Naive thymus-derived CD4-positive, alpha-beta T cell (primary cell): ENCODE measurements at regions of chr14 and their contacts with region 1.

Region 1: DNA sequence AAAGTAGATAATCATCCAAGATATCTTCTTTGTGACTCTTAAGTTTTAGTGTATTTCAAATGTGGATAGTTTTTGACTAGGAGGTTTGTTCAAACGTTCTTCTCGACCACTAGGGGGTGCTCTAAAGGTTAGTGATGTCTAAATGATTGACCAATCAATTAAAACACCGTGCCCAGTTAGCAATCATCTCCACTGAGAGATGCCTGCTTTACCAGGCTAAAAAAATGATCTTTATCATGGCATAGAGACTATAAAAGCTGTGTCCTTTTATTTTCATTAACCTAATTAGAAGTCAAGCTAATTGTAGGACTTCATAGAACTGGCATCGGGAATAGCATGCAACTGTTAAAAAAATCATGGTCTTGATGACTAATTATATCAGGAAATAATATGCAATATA is 153.9 kb downstream of the PRKCH start:
- DNase-seq: peak in 2 of 9 donors; percentile 32 to 34
- ATAC-seq: no peak
- H3K4me3 ChIP-seq: no peak overlapping the region
- H3K4me3 Mint-ChIP-seq: peak overlapping the region in 8 of 10 donors; percentile 28 to 94 (median 48)
- H3K27ac ChIP-seq: peak overlapping the region; percentile 98
- H3K27ac Mint-ChIP-seq: peak overlapping the region in 8 of 9 donors; percentile 84 to 100 (median 96)
- H3K4me1 ChIP-seq: peaks cover 93 to 95% of the 10 kb centered on the region in 2 donors
- H3K4me1 Mint-ChIP-seq: peaks cover 55 to 98% (median 95%) of the 10 kb centered on the region in 7 donors
- H3K27me3 ChIP-seq: no peaks in the 10 kb centered on the region
- H3K27me3 Mint-ChIP-seq: no peaks in the 10 kb centered on the region

Region 2: DNA sequence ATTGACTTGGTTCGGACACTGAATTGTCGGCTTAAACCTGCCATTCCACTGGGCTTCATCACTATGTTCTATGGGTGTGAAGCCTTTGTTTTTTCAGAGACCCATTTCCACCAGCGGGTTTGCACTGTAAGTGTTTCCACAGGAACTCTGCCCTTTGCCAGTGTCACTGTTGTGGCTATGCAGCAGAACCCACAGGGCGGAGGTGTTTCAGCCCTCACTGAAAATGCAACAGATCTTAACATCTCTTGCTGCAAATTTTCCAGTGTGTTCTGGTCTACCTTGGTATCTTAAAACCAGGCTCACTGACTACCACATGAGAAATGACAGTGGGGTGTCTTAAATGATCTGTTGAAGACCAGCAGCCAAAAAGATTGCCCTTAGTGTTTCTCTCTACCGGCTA is 132.8 kb before region 1 on chr14:
- CTCF ChIA-PET with region 1: interaction called, 3 read pairs
- POLR2A ChIA-PET with region 1: interaction called, 9 read pairs
- intact Hi-C with region 1: loop called in 1 of 2 experiments (anchors 1 kb)
- DNase-seq: peak; percentile 46 to 91 (median 87)
- ATAC-seq: peak; percentile 76
- H3K4me3 ChIP-seq: peak overlapping the region; percentile 28
- H3K4me3 Mint-ChIP-seq: peak overlapping the region; percentile 76 to 97 (median 82)
- H3K27ac ChIP-seq: peak overlapping the region; percentile 76
- H3K27ac Mint-ChIP-seq: peak overlapping the region in 8 of 9 donors; percentile 92 to 100 (median 98)
- H3K4me1 ChIP-seq: peaks cover 92% of the 10 kb centered on the region in 2 donors
- H3K4me1 Mint-ChIP-seq: peaks cover 18 to 94% (median 82%) of the 10 kb centered on the region in 7 donors
- H3K27me3 ChIP-seq: no peaks in the 10 kb centered on the region
- H3K27me3 Mint-ChIP-seq: no peaks in the 10 kb centered on the region

Region 3: DNA sequence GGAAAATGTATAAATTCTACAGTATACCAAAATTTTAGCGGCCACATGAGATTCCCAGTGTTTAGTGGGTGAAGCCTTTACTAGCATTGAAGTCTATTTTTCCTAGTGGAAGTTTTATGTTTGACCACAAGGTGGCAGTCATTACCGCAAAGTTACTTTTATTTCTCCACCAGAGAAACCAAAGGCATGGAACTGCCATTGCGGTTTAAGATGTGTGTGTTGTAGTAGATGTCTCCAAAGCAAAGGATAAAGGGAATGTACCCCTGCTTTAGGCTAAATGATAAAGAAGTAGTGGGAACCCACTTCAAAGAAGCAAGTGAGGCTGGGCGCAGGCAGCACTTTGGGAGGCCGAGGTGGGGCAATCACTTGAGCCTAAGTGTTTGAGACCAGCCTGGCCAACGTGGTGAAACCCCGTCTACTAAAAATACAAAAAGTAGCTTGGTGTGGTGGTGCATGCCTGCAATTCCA is 13.5 kb before region 1 on chr14:
- CTCF ChIA-PET with region 1: interaction called, 12 read pairs
- POLR2A ChIA-PET with region 1: interaction called, 6 read pairs
- intact Hi-C with region 1: loop called (anchors 1 kb)
- DNase-seq: peak in 7 of 9 donors; percentile 59 to 78 (median 71)
- ATAC-seq: peak; percentile 76
- H3K4me3 ChIP-seq: no peak overlapping the region
- H3K4me3 Mint-ChIP-seq: peak overlapping the region; percentile 4 to 69 (median 41)
- H3K27ac ChIP-seq: peak overlapping the region; percentile 56
- H3K27ac Mint-ChIP-seq: peak overlapping the region in 8 of 9 donors; percentile 85 to 97 (median 90)
- H3K4me1 ChIP-seq: peaks cover 12 to 21% of the 10 kb centered on the region in 2 donors
- H3K4me1 Mint-ChIP-seq: peaks cover 33 to 87% (median 82%) of the 10 kb centered on the region in 7 donors
- H3K27me3 ChIP-seq: no peaks in the 10 kb centered on the region
- H3K27me3 Mint-ChIP-seq: no peaks in the 10 kb centered on the region

Region 4: DNA sequence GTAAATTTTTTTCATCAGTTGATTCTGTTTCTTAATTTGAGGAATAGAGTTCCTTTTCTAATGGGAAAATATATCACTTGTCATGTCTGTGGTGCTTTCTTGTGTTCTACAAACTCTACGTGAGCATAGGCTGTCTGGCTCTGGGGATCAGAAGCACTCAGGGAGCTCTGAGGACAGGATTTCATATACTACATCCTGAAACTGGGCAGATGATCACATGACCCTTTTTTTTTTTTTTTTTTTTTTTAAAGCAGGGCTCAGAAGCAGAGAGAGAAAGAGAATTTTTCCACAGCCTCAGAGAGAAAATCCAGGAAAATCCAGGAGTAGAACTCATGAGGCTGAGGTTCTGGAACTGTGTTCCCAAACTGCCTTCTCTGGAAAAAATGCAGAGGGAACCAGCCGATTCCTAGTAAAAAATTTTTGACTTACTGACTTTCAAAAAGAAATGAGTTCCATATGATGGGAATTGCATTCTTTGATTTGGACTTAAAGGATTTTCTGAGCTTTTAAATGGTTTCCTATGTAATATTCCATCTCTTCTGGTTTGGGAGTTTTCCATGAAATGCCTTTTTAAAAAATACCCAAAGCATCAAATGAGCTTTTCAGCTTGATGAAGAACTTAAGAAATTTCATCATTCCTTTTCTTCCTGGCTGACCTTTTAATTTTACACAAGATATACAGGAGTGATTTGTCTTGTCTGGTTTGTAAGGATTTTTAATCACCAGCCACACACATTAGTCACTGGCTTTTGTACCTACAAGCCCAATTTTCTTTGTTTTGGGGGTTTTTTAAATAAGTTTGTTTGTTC is 36.9 kb after region 1 on chr14:
- CTCF ChIA-PET with region 1: interaction called, 3 read pairs
- POLR2A ChIA-PET with region 1: interaction called, 7 read pairs
- intact Hi-C with region 1: loop called in 1 of 2 experiments (anchors 1 kb)
- DNase-seq: no peak
- ATAC-seq: no peak
- H3K4me3 ChIP-seq: no peak overlapping the region
- H3K4me3 Mint-ChIP-seq: peak overlapping the region in 9 of 10 donors; percentile 37 to 74 (median 55)
- H3K27ac ChIP-seq: peak overlapping the region; percentile 52
- H3K27ac Mint-ChIP-seq: peak overlapping the region in 7 of 9 donors; percentile 68 to 95 (median 84)
- H3K4me1 ChIP-seq: peaks cover 37 to 46% of the 10 kb centered on the region in 2 donors
- H3K4me1 Mint-ChIP-seq: peaks cover 47 to 100% (median 95%) of the 10 kb centered on the region in 7 donors
- H3K27me3 ChIP-seq: no peaks in the 10 kb centered on the region
- H3K27me3 Mint-ChIP-seq: no peaks in the 10 kb centered on the region

Region 5: DNA sequence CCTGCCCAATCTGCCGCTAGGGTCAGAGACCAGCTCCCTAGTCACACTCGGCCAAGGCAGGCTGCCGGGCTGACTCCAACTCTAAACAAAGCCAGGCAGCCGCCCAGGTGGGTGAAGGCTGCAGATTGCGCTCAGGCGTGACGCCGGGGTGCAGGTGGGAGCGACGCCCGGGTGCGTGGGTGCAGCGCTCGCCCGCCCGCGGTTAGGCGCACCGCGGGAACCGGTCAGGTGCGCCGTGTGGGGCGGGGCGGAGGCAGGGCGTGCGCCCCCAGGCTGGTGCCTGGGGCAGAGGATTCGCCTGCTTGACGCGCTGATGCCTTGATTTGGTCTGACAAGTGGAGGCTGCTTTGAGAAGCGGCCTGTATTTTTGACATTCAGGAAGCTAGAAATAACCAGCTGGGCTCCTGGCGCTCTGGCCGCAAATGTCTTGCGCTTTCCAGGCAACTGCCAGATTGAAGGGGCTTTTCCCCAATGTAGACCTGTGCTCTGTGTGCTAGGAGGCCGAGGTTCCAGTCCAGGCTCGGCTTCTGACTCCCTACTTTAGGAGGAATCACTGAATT is 93.3 kb after region 1 on chr14:
- CTCF ChIA-PET with region 1: no interaction called
- POLR2A ChIA-PET with region 1: interaction called, 3 read pairs
- intact Hi-C with region 1: loop called in 1 of 2 experiments (anchors 2 kb)
- DNase-seq: peak; percentile 49 to 77 (median 73)
- ATAC-seq: peak; percentile 86
- H3K4me3 ChIP-seq: peak overlapping the region; percentile 47
- H3K4me3 Mint-ChIP-seq: peak overlapping the region; percentile 74 to 89 (median 82)
- H3K27ac ChIP-seq: peak overlapping the region; percentile 26
- H3K27ac Mint-ChIP-seq: peak overlapping the region; percentile 44 to 95 (median 86)
- H3K4me1 ChIP-seq: peaks cover 0 to 34% of the 10 kb centered on the region in 2 donors
- H3K4me1 Mint-ChIP-seq: peaks cover 40 to 77% (median 57%) of the 10 kb centered on the region in 7 donors
- H3K27me3 ChIP-seq: no peaks in the 10 kb centered on the region
- H3K27me3 Mint-ChIP-seq: peaks cover 0 to 10% (median 0%) of the 10 kb centered on the region in 5 donors

Region 6: DNA sequence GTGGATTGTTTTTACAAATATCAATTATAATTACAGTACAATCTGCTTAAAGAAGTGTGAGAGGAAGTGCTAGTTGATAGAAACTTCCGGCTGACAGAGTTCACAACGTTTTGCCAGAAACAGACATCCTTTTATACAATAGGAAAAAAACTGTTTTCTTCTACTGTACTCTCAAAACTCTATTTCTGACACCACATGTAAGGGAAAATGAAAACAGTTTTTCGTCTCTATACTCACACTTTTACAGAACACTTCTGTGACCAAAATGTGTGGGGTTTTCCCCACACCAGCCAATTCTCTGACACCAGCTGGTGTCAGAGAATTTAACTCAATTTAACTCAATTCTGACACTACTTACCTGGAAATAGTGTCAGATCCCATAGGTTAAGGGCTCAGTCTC is 195.8 kb after region 1 on chr14:
- CTCF ChIA-PET with region 1: interaction called, 3 read pairs
- POLR2A ChIA-PET with region 1: no interaction called
- intact Hi-C with region 1: loop called in 1 of 2 experiments (anchors 1 kb)
- DNase-seq: peak in 7 of 9 donors; percentile 67 to 87 (median 82)
- ATAC-seq: peak; percentile 97
- H3K4me3 ChIP-seq: peak overlapping the region; percentile 24
- H3K4me3 Mint-ChIP-seq: peak overlapping the region in 1 of 10 donors; percentile 68
- H3K27ac ChIP-seq: peak overlapping the region; percentile 85
- H3K27ac Mint-ChIP-seq: no peak overlapping the region
- H3K4me1 ChIP-seq: peaks cover 29 to 66% of the 10 kb centered on the region in 2 donors
- H3K4me1 Mint-ChIP-seq: peaks cover 5 to 23% (median 18%) of the 10 kb centered on the region in 7 donors
- H3K27me3 ChIP-seq: no peaks in the 10 kb centered on the region
- H3K27me3 Mint-ChIP-seq: no peaks in the 10 kb centered on the region

Region 7: DNA sequence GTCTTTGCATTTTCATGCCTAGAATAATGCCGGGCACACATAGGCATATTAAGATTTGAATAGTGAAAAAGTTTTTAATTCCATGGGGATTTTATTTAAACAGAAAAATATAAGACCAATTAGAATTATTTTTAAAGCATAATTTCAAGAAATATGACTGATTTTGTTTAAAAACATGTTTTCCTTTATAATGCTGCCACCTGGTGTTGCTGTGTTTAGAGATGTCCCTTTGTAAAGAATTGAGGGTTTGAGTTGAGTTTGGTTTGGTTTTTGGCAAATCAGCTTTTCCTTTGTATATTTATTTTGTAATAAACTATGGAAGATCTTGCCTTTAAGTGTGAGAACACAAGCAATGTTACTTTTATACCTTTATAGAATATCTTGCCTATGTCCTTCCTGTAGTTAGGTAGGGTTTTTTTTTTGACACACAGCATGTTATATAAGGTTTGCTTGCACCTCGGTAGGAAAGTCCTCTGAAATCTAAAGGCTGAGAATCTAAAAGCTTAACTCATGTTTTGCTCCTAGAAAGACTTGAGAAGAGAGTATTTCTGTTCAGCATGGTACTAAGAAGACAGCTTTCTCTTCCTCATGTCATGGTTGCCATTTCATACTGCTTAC is 255.5 kb after region 1 on chr14:
- CTCF ChIA-PET with region 1: interaction called, 7 read pairs
- POLR2A ChIA-PET with region 1: interaction called, 4 read pairs
- intact Hi-C with region 1: loop called in 1 of 2 experiments (anchors 1 kb)
- DNase-seq: peak in 6 of 9 donors; percentile 25 to 51 (median 46)
- ATAC-seq: peak; percentile 39
- H3K4me3 ChIP-seq: no peak overlapping the region
- H3K4me3 Mint-ChIP-seq: peak overlapping the region in 1 of 10 donors; percentile 9
- H3K27ac ChIP-seq: no peak overlapping the region
- H3K27ac Mint-ChIP-seq: peak overlapping the region; percentile 9 to 76 (median 38)
- H3K4me1 ChIP-seq: peaks cover 0 to 4% of the 10 kb centered on the region in 2 donors
- H3K4me1 Mint-ChIP-seq: peaks cover 13 to 72% (median 41%) of the 10 kb centered on the region in 7 donors
- H3K27me3 ChIP-seq: no peaks in the 10 kb centered on the region
- H3K27me3 Mint-ChIP-seq: no peaks in the 10 kb centered on the region